Aorta (tissue), 5 donors: ENCODE measurements at regions of chr1 and their contacts with region 1.

Region 1: GRCh38 chr1:8202182-8202905 is 115.6 kb upstream of the SLC45A1 start:
- DNase-seq: peak; percentile 88 to 89
- ATAC-seq: peak; percentile 85
- H3K4me3 ChIP-seq: no peak overlapping the region
- H3K27ac ChIP-seq: peak overlapping the region; percentile 97 to 100
- H3K4me1 ChIP-seq: peaks cover 2 to 8% of the 10 kb centered on the region in 2 donors
- H3K27me3 ChIP-seq: no peaks in the 10 kb centered on the region

Region 2: DNA sequence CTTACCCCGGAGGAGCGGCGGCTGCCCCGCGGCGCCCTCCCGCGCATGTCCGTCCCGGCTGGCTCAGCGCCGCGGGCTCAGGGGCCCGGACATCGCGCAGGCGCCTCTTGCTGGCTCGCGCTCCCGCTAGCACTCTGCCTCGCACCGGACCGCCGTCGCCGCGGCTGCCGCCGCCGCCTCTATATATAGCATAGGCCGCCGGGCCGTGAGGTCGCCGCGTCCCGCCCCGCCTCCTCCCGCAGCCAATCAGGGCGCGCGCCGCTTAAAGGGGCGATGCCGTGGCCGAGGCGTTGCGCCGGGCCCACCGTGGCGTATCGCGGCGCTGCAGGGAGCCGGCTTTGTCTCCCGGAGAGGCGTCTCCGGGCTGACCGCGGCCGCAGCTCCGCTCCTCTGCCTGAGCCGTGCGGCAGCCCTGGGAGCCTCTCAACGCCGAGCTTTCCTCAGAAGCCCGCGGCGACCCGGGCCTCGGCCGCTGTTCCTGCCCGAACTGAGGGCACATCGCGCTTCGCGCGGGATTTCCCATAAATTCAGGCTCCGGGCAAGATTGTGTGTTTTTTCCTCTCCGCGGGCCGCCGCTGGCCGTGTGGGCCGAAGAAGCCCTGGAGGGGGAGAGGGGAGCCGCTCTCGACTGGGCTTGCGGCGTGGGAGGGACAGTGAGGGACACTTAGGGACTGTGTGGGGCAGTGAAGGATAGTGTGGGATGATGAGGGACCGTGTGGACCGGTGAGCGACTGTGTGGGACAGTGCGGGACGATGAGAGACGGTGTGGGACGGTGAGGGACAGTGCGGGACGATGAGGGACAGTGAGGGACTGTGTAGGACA is 176.0 kb before region 1 on chr1 and contains the start of gene ERRFI1:
- intact Hi-C with region 1: loop called in 1 of 2 experiments (anchors 5 kb)
- DNase-seq: peak; percentile 96 to 98
- ATAC-seq: peak; percentile 95
- H3K4me3 ChIP-seq: peak within 1 kb of the TSS; percentile 77 to 98
- H3K27ac ChIP-seq: peak within 1 kb of the TSS; percentile 90 to 91
- H3K4me1 ChIP-seq: peaks cover 2 to 5% of the 10 kb centered on the region in 2 donors
- H3K27me3 ChIP-seq: no peaks in the 10 kb centered on the region
- total RNA-seq, gene ERRFI1: 153 to 258 TPM

Region 3: GRCh38 chr1:8121261-8122170 is 80.8 kb before region 1 on chr1:
- intact Hi-C with region 1: loop called in 1 of 2 experiments (anchors 5 kb)
- DNase-seq: peak; percentile 76 to 77
- ATAC-seq: peak; percentile 87
- H3K4me3 ChIP-seq: no peak overlapping the region
- H3K27ac ChIP-seq: peak overlapping the region; percentile 88 to 99
- H3K4me1 ChIP-seq: peaks cover 8 to 21% of the 10 kb centered on the region in 2 donors
- H3K27me3 ChIP-seq: no peaks in the 10 kb centered on the region

Region 4: DNA sequence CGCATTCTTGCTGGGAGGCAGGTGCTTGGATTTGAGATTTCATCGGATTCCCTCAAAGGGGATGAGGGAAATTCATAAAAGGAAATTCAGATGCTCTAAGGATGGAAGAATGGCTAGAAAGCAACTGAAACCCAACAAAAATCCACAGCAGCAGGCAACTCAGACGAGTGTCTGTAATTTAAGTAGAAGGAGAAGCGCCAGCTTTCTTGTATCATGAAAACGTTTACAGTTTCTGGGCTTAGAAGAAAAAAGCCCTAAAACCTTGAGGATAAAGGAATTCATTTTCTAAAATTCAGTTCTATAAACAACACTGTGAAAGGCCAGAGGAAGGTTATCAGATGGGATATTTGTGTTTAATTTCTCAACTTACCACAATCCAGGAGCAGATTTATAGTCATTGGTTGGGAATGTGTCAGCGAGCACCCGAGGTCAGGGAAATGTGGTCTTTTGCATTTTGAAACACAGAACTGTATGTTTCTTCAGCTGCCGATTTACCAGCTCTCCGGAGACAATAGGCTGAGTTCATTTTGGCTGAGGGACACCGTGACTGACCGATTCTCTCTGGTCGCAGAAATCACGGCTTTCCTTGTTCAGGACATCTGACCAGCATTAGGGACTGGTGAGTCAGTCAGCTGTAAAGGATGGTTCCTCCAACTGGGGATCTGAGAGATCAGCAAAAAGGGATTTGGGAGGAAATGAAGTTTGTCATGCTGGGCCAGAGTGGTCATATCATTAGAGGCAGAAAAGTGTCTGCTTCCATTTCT is 64.7 kb before region 1 on chr1:
- intact Hi-C with region 1: loop called (anchors 5 kb)
- DNase-seq: peak in 1 of 2 donors; percentile 75
- ATAC-seq: peak; percentile 71
- H3K4me3 ChIP-seq: no peak overlapping the region
- H3K27ac ChIP-seq: peak overlapping the region; percentile 57 to 85
- H3K4me1 ChIP-seq: peaks cover 3 to 9% of the 10 kb centered on the region in 2 donors
- H3K27me3 ChIP-seq: no peaks in the 10 kb centered on the region

Region 5: GRCh38 chr1:8276173-8276914 is 74.0 kb after region 1 on chr1:
- intact Hi-C with region 1: no loop called
- DNase-seq: no peak
- ATAC-seq: no peak
- H3K4me3 ChIP-seq: no peak overlapping the region
- H3K27ac ChIP-seq: no peak overlapping the region
- H3K4me1 ChIP-seq: no peaks in the 10 kb centered on the region
- H3K27me3 ChIP-seq: no peaks in the 10 kb centered on the region

Region 6: DNA sequence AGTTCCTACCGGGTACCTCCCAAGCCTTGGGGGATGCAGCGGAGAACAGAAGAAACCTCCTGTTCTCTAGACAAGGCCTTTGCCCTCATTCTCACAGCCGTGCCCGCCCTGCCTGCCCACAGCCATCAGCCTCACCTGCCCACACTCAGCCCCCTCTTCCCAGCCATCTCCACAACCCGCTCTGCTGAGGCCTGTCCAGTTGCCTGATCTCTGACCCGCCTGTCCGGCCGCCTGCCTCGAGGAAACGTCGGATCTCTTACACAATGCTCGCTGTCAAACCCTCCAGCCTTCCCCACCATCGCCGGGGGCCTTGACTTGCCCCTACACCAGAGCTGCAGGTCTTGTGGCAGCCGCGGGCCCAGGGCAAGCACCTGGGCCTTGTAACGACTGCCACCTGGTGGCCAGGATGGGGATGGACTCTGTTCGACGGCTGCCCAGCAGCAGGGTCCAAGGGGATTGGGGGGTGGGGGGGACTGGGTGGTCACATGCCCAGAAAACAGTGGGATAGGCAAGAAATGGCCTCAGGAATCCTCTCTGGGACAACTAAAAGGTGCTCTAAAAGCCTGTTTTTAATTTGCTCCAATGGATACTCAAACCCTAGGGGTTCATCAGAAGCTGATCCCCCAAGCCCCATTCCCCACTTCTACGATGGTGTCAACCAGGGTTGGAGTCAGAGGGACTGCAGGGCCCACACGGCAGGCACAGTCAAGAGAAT is 146.6 kb after region 1 on chr1:
- intact Hi-C with region 1: no loop called
- DNase-seq: peak; percentile 80 to 89
- ATAC-seq: peak; percentile 79
- H3K4me3 ChIP-seq: no peak overlapping the region
- H3K27ac ChIP-seq: no peak overlapping the region
- H3K4me1 ChIP-seq: no peaks in the 10 kb centered on the region
- H3K27me3 ChIP-seq: no peaks in the 10 kb centered on the region